CD4-positive, alpha-beta T cell (primary cell): ENCODE measurements at regions of chr12 and their contacts with region 1.

Region 1: GRCh38 chr12:100200463-100201181 is at the start of gene ACTR6:
- DNase-seq: peak; percentile 94 to 99 (median 97)
- ATAC-seq: peak; percentile 84
- H3K4me3 ChIP-seq: peak within 1 kb of the TSS; percentile 73
- H3K4me3 Mint-ChIP-seq: peak within 1 kb of the TSS; percentile 98
- H3K27ac ChIP-seq: peak within 1 kb of the TSS; percentile 86 to 91
- H3K27ac Mint-ChIP-seq: peak within 1 kb of the TSS; percentile 99
- H3K4me1 ChIP-seq: peaks cover 47% of the 10 kb centered on the region
- H3K4me1 Mint-ChIP-seq: peaks cover 40% of the 10 kb centered on the region
- H3K27me3 ChIP-seq: no peaks in the 10 kb centered on the region
- H3K27me3 Mint-ChIP-seq: no peaks in the 10 kb centered on the region
- CTCF ChIP-seq: no peak
- total RNA-seq, gene ACTR6: 21.3 to 21.8 TPM

Region 2: DNA sequence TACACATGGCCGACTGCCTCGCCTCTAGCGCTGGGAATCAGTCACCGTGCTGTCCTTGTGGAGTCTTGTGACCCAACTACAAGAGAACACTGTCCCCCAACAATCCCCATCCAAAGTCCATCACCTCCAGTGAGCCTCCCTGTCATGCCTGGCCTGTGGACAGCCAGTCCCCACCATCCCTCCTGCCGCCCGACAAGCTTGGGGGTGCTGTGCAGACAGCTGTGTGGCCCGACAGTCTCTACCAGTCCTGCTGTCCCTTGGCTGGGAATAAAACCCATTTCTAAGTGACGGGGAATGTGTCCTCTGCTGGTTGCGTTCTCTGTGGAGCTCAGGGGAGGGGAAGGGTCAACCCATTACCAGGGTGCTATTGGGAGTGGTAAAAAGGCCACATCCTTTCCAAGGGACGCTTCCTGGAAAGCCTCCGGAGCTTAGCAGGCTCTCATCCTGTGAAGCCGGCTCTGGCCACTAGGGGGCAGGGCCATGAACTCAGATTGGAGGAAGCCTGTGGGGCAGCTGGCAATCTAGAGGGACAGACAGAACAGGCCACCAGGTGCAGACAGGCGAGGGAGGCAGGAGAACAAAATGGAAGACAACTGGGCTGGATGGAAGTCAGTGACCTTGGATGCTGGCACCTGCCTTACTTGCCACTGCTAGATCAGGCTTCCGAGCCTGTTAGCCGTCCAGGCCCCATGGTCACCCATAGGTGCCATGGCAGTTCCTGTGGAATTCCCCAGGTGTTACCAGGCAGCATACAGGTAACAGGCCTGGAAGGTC is 46.0 kb before region 1 on chr12:
- CTCF ChIA-PET with region 1: interaction called, 10 read pairs
- POLR2A ChIA-PET with region 1: interaction called, 10 read pairs
- intact Hi-C with region 1: loop called in 1 of 2 experiments (anchors 1 kb)
- DNase-seq: peak; percentile 53 to 82 (median 64)
- ATAC-seq: peak; percentile 74
- H3K4me3 ChIP-seq: no peak overlapping the region
- H3K4me3 Mint-ChIP-seq: no peak overlapping the region
- H3K27ac ChIP-seq: no peak overlapping the region
- H3K27ac Mint-ChIP-seq: no peak overlapping the region
- H3K4me1 ChIP-seq: peaks cover 6% of the 10 kb centered on the region
- H3K4me1 Mint-ChIP-seq: peaks cover 4% of the 10 kb centered on the region
- H3K27me3 ChIP-seq: no peaks in the 10 kb centered on the region
- H3K27me3 Mint-ChIP-seq: no peaks in the 10 kb centered on the region
- CTCF ChIP-seq: peak; percentile 86

Region 3: DNA sequence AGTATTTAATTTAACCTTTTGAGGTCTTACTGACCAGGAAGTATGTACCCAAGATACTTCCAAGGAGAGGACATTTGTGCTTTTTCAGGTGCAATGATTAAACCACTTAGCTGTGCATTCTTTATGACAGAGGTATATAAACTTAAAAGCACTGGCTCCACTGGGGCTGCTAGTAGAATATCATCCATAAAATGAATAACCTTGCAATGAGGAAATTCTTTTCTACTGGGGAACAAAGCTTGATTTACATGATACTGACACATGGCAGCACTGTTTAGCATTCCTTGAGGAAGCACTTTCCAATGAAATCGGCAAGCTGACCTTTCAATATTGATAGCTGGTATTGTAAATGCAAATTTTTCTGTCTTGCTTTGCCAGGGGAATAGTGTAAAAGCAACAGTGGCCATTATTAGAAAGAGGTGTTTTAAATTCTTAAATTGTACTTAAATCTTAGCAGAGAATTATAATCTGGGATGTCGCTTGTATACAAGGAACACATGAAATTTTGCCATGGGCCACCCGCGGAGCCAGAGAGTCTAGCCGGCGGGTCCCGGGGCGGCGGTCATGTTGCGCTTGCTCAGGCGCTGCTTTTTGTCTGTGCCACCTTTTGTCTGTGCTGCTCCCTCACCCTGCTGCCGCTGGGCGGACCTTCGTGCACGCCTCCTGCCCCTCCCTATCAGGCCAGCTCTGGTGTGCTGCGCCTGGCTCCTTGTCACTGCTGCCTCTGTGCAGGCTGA is 37.0 kb before region 1 on chr12:
- CTCF ChIA-PET with region 1: interaction called, 10 read pairs
- POLR2A ChIA-PET with region 1: interaction called, 16 read pairs
- intact Hi-C with region 1: loop called (anchors 2 to 5 kb)
- DNase-seq: peak; percentile 49 to 85 (median 64)
- ATAC-seq: peak; percentile 100
- H3K4me3 ChIP-seq: no peak overlapping the region
- H3K4me3 Mint-ChIP-seq: peak overlapping the region; percentile 64
- H3K27ac ChIP-seq: no peak overlapping the region
- H3K27ac Mint-ChIP-seq: no peak overlapping the region
- H3K4me1 ChIP-seq: peaks cover 8% of the 10 kb centered on the region
- H3K4me1 Mint-ChIP-seq: peaks cover 12% of the 10 kb centered on the region
- H3K27me3 ChIP-seq: no peaks in the 10 kb centered on the region
- H3K27me3 Mint-ChIP-seq: no peaks in the 10 kb centered on the region
- CTCF ChIP-seq: no peak

Region 4: GRCh38 chr12:100266835-100267618 is 66.4 kb after region 1 on chr12 and contains the starts of genes DEPDC4 and SCYL2:
- CTCF ChIA-PET with region 1: interaction called, 5 read pairs
- POLR2A ChIA-PET with region 1: interaction called, 72 read pairs
- intact Hi-C with region 1: loop called (anchors 1 to 2 kb)
- DNase-seq: peak; percentile 88 to 97 (median 93)
- ATAC-seq: peak; percentile 90
- H3K4me3 ChIP-seq: peak within 1 kb of the TSS; percentile 85
- H3K4me3 Mint-ChIP-seq: peak within 1 kb of the TSS; percentile 98
- H3K27ac ChIP-seq: peak within 1 kb of the TSS; percentile 72 to 86
- H3K27ac Mint-ChIP-seq: peak within 1 kb of the TSS; percentile 96
- H3K4me1 ChIP-seq: peaks cover 12% of the 10 kb centered on the region
- H3K4me1 Mint-ChIP-seq: peaks cover 42% of the 10 kb centered on the region
- H3K27me3 ChIP-seq: no peaks in the 10 kb centered on the region
- H3K27me3 Mint-ChIP-seq: no peaks in the 10 kb centered on the region
- CTCF ChIP-seq: no peak
- total RNA-seq, gene DEPDC4: 0.27 to 0.50 TPM
- total RNA-seq, gene SCYL2: 37.5 to 40.8 TPM

Region 5: DNA sequence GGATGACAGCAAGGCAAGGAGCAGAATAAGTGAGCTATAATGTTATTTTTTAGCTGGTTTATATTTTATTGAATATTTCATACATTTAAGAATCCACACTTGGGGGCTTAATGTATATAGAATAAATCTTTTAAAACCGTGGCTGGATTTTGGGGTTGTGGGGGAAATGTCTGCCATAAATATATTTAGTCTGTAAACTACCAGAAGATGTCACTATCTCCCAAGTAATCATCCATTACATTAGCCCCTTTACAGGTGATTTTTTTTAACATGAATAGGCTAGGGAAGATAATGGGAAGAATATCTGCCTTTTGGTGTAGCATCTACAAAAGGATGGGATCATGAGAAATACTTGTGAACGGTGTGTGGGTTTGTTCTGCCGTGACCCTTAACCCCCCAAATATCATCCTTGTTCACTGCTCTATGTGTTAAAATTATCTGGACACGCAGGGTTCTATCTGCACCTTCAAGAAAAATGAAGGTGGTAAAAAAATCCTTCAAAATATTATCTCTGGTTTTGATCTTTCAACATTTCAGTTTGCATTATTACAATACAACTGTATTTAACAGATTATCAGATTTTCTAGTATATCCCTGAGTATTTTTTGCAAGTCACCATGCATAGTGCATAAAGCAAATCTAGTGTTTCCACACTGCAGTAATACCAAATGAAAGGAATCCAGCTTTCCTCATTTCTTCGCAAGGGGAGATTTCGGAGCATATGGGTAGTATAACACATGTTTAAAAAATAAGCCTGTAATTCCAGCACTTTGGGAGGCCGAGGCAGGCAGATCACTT is 148.2 kb after region 1 on chr12:
- CTCF ChIA-PET with region 1: no interaction called
- POLR2A ChIA-PET with region 1: no interaction called
- intact Hi-C with region 1: no loop called
- DNase-seq: no peak
- ATAC-seq: no peak
- H3K4me3 ChIP-seq: no peak overlapping the region
- H3K4me3 Mint-ChIP-seq: no peak overlapping the region
- H3K27ac ChIP-seq: no peak overlapping the region
- H3K27ac Mint-ChIP-seq: no peak overlapping the region
- H3K4me1 ChIP-seq: no peaks in the 10 kb centered on the region
- H3K4me1 Mint-ChIP-seq: no peaks in the 10 kb centered on the region
- H3K27me3 ChIP-seq: no peaks in the 10 kb centered on the region
- H3K27me3 Mint-ChIP-seq: peaks cover 13% of the 10 kb centered on the region
- CTCF ChIP-seq: no peak

Region 6: GRCh38 chr12:101280006-101280505 is 1079.4 kb after region 1 on chr12 and contains the start of gene UTP20:
- CTCF ChIA-PET with region 1: no interaction called
- POLR2A ChIA-PET with region 1: no interaction called
- intact Hi-C with region 1: loop called in 1 of 2 experiments (anchors 10 kb)
- DNase-seq: peak; percentile 89 to 96 (median 94)
- ATAC-seq: peak; percentile 100
- H3K4me3 ChIP-seq: peak within 1 kb of the TSS; percentile 72
- H3K4me3 Mint-ChIP-seq: peak within 1 kb of the TSS; percentile 97
- H3K27ac ChIP-seq: no peak within 1 kb of the TSS
- H3K27ac Mint-ChIP-seq: peak within 1 kb of the TSS; percentile 71
- H3K4me1 ChIP-seq: peaks cover 8% of the 10 kb centered on the region
- H3K4me1 Mint-ChIP-seq: peaks cover 25% of the 10 kb centered on the region
- H3K27me3 ChIP-seq: no peaks in the 10 kb centered on the region
- H3K27me3 Mint-ChIP-seq: peaks cover 13% of the 10 kb centered on the region
- CTCF ChIP-seq: no peak
- total RNA-seq, gene UTP20: 9.1 to 9.6 TPM